ENCODE measurements at regions of chr4 and their contacts with region 1.

Region 1: DNA sequence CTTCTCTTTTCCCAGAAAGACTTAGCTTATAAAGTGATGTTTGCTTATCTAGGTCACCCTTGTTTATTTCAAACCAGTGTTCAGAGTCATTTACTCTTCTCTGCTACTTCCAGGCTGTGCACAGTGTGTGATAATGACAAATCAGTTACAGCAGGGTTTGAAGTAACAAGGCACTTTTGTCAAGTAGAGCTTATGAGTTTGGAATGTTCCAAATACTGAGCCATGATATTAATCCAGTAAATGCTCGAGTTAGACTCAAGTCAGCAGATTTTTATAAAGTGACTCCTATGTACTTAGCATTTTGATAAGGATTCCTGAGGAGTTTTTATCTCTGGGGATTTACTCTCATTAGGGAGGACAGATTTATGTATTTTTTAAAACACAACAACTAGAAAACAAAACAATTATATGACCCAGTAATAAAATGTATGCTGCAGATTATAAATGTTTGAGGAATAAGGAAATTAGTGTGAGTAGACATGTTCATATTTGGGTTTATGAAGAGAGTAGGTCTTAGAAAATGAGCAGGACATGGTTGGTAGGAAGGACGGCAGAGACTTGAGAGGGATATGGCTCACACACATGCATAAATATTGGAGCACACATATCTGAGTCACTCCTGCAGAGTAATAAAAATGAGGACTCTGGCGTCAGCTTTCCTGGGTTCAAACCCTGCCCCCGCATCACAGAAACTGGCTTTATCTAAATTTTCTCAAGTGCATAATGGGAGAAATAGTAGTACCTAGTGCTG is 271.2 kb downstream of the FBXO8 start:
- DNase-seq: no peak
- H3K4me3 ChIP-seq: no peak overlapping the region
- H3K27ac ChIP-seq: peak overlapping the region; percentile 16 to 100; a peak in 3 of 4 replicates
- H3K4me1 ChIP-seq: peaks cover 7 to 42% of the 10 kb centered on the region in 2 experiments; a peak in 3 of 4 replicates
- H3K27me3 ChIP-seq: no peaks in the 10 kb centered on the region
- CTCF ChIP-seq: no peak
- EP300 ChIP-seq: no peak
- RAD21 ChIP-seq: no peak

Region 2: GRCh38 chr4:173522123-173522950 is 490.0 kb before region 1 on chr4:
- CTCF ChIA-PET with region 1: interaction called, 3 read pairs
- POLR2A ChIA-PET with region 1: interaction called, 52 read pairs
- DNase-seq: peak; percentile 73
- H3K4me3 ChIP-seq: peak overlapping the region; percentile 61 to 92
- H3K27ac ChIP-seq: peak overlapping the region; percentile 99
- H3K4me1 ChIP-seq: peaks cover 23 to 30% of the 10 kb centered on the region in 2 experiments
- H3K27me3 ChIP-seq: no peaks in the 10 kb centered on the region
- CTCF ChIP-seq: peak; percentile 22
- EP300 ChIP-seq: peak in 1 of 2 experiments; percentile 82; a peak in 2 of 4 replicates
- RAD21 ChIP-seq: no peak

Region 3: DNA sequence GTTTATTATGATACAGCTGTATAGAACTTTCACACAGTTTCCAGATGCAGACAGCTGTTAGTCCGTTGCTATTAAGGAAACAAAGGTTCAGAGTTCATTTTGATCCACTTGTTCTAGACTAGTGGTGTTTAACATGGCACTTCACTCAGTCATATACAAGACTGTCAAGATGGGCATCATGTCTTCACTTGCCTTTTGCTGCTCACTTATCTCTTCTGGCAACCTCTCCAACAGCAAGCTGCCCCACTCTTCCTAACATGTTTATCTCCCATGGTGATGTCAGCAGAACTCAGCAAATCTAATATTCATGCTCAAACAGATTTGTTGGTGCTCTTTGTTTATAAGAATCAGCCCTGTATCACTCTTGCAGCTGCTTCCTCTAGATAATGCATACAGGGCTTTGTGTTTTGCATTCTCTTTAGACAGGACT is 246.1 kb before region 1 on chr4:
- CTCF ChIA-PET with region 1: interaction called, 4 read pairs
- POLR2A ChIA-PET with region 1: interaction called, 16 read pairs
- DNase-seq: peak; percentile 67
- H3K4me3 ChIP-seq: no peak overlapping the region
- H3K27ac ChIP-seq: peak overlapping the region in 1 of 2 experiments; percentile 100; a peak in 2 of 4 replicates
- H3K4me1 ChIP-seq: peaks cover 0 to 45% of the 10 kb centered on the region in 2 experiments; a peak in 2 of 4 replicates
- H3K27me3 ChIP-seq: no peaks in the 10 kb centered on the region
- CTCF ChIP-seq: no peak
- EP300 ChIP-seq: peak; percentile 29 to 100; a peak in 2 of 4 replicates
- RAD21 ChIP-seq: peak; percentile 53

Region 4: DNA sequence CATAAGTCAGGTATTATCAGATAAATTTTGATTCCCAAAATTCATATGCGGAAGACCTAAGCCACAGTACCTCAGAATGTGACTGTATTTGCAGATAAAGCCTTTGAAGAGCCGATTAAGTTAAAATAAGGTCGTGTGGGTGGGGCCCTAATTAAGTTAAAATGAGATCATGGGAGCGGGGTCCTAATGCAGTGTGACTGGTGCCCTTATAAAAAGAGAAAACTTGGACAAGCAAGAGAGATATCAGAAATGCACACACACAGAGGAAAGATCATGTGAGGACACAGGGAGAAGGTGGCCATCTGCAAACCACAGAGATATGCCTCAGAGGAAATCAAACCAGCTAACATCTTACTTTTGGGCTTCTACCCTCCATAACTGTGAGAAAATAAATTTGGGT is 35.1 kb after region 1 on chr4:
- CTCF ChIA-PET with region 1: interaction called, 3 read pairs
- POLR2A ChIA-PET with region 1: interaction called, 10 read pairs
- DNase-seq: peak; percentile 54
- H3K4me3 ChIP-seq: peak overlapping the region in 1 of 2 experiments; percentile 19; a peak in 1 of 4 replicates
- H3K27ac ChIP-seq: peak overlapping the region; percentile 12 to 99; a peak in 3 of 4 replicates
- H3K4me1 ChIP-seq: peaks cover 0 to 12% of the 10 kb centered on the region in 2 experiments; a peak in 2 of 4 replicates
- H3K27me3 ChIP-seq: no peaks in the 10 kb centered on the region
- CTCF ChIP-seq: no peak
- EP300 ChIP-seq: peak in 1 of 2 experiments; percentile 94; a peak in 2 of 4 replicates
- RAD21 ChIP-seq: peak; percentile 27; the same call in 1 of the 2 replicates

Region 5: GRCh38 chr4:174120446-174121295 is 108.4 kb after region 1 on chr4:
- CTCF ChIA-PET with region 1: interaction called, 5 read pairs
- POLR2A ChIA-PET with region 1: interaction called, 23 read pairs
- DNase-seq: peak; percentile 69
- H3K4me3 ChIP-seq: peak overlapping the region; percentile 40 to 59
- H3K27ac ChIP-seq: peak overlapping the region; percentile 49 to 100; a peak in 3 of 4 replicates
- H3K4me1 ChIP-seq: peaks cover 4 to 11% of the 10 kb centered on the region in 2 experiments; a peak in 2 of 4 replicates
- H3K27me3 ChIP-seq: no peaks in the 10 kb centered on the region
- CTCF ChIP-seq: peak; percentile 72
- EP300 ChIP-seq: peak; percentile 5 to 67; a peak in 1 of 4 replicates
- RAD21 ChIP-seq: peak; percentile 79

Region 6: GRCh38 chr4:174156239-174156826 is 144.0 kb after region 1 on chr4:
- CTCF ChIA-PET with region 1: interaction called, 12 read pairs
- POLR2A ChIA-PET with region 1: interaction called, 9 read pairs
- DNase-seq: peak; percentile 27
- H3K4me3 ChIP-seq: peak overlapping the region in 1 of 2 experiments; percentile 40; a peak in 1 of 4 replicates
- H3K27ac ChIP-seq: peak overlapping the region; percentile 74 to 100; a peak in 3 of 4 replicates
- H3K4me1 ChIP-seq: peaks cover 40 to 51% of the 10 kb centered on the region in 2 experiments; a peak in 3 of 4 replicates
- H3K27me3 ChIP-seq: no peaks in the 10 kb centered on the region
- CTCF ChIP-seq: peak; percentile 76
- EP300 ChIP-seq: peak in 1 of 2 experiments; percentile 56; a peak in 1 of 4 replicates
- RAD21 ChIP-seq: peak; percentile 94

Region 7: GRCh38 chr4:174222266-174222872 is 210.1 kb after region 1 on chr4:
- CTCF ChIA-PET with region 1: no interaction called
- POLR2A ChIA-PET with region 1: interaction called, 21 read pairs
- DNase-seq: no peak
- H3K4me3 ChIP-seq: no peak overlapping the region; a peak in 1 of 4 replicates
- H3K27ac ChIP-seq: peak overlapping the region in 1 of 2 experiments; percentile 36; a peak in 2 of 4 replicates
- H3K4me1 ChIP-seq: peaks cover 1 to 26% of the 10 kb centered on the region in 2 experiments; a peak in 3 of 4 replicates
- H3K27me3 ChIP-seq: no peaks in the 10 kb centered on the region
- CTCF ChIP-seq: peak; percentile 76
- EP300 ChIP-seq: no peak
- RAD21 ChIP-seq: peak; percentile 69